Heart right ventricle (tissue), 16 donors: ENCODE measurements at regions of chr6 and their contacts with region 1.

Region 1: GRCh38 chr6:141562851-141563763 is 569.6 kb upstream of the GJE1 start:
- DNase-seq: peak; percentile 23 to 72
- ATAC-seq: peak; percentile 89 to 96 (median 94)
- H3K4me3 ChIP-seq: peak overlapping the region; percentile 14 to 53 (median 38)
- H3K27ac ChIP-seq: peak overlapping the region; percentile 63 to 91 (median 76)
- H3K4me1 ChIP-seq: peaks cover 0 to 23% (median 9%) of the 10 kb centered on the region in 9 donors
- H3K27me3 ChIP-seq: no peaks in the 10 kb centered on the region
- CTCF ChIP-seq: peak; percentile 83 to 92 (median 88)

Region 2: GRCh38 chr6:141164042-141164736 is 398.9 kb before region 1 on chr6:
- intact Hi-C with region 1: loop called in 1 of 10 experiments (anchors 5 kb)
- DNase-seq: peak in 1 of 2 donors; percentile 59
- ATAC-seq: peak; percentile 78 to 96 (median 93)
- H3K4me3 ChIP-seq: no peak overlapping the region
- H3K27ac ChIP-seq: peak overlapping the region; percentile 67 to 93 (median 82)
- H3K4me1 ChIP-seq: peaks cover 0 to 29% (median 12%) of the 10 kb centered on the region in 9 donors
- H3K27me3 ChIP-seq: no peaks in the 10 kb centered on the region
- CTCF ChIP-seq: no peak

Region 3: GRCh38 chr6:141252828-141253608 is 310.1 kb before region 1 on chr6:
- intact Hi-C with region 1: loop called in 2 of 10 experiments (anchors 5 to 10 kb)
- DNase-seq: no peak
- ATAC-seq: peak in 4 of 8 donors; percentile 38 to 70 (median 42)
- H3K4me3 ChIP-seq: peak overlapping the region in 5 of 10 donors; percentile 3 to 25 (median 23)
- H3K27ac ChIP-seq: peak overlapping the region in 7 of 10 donors; percentile 48 to 73 (median 59)
- H3K4me1 ChIP-seq: peaks cover 0 to 24% (median 9%) of the 10 kb centered on the region in 9 donors
- H3K27me3 ChIP-seq: no peaks in the 10 kb centered on the region
- CTCF ChIP-seq: no peak

Region 4: GRCh38 chr6:141618180-141618581 is 55.1 kb after region 1 on chr6:
- intact Hi-C with region 1: no loop called
- DNase-seq: no peak
- ATAC-seq: no peak
- H3K4me3 ChIP-seq: no peak overlapping the region
- H3K27ac ChIP-seq: no peak overlapping the region
- H3K4me1 ChIP-seq: no peaks in the 10 kb centered on the region
- H3K27me3 ChIP-seq: no peaks in the 10 kb centered on the region
- CTCF ChIP-seq: no peak